ENCODE measurements at regions of chr7 and their contacts with region 1.

Region 1: DNA sequence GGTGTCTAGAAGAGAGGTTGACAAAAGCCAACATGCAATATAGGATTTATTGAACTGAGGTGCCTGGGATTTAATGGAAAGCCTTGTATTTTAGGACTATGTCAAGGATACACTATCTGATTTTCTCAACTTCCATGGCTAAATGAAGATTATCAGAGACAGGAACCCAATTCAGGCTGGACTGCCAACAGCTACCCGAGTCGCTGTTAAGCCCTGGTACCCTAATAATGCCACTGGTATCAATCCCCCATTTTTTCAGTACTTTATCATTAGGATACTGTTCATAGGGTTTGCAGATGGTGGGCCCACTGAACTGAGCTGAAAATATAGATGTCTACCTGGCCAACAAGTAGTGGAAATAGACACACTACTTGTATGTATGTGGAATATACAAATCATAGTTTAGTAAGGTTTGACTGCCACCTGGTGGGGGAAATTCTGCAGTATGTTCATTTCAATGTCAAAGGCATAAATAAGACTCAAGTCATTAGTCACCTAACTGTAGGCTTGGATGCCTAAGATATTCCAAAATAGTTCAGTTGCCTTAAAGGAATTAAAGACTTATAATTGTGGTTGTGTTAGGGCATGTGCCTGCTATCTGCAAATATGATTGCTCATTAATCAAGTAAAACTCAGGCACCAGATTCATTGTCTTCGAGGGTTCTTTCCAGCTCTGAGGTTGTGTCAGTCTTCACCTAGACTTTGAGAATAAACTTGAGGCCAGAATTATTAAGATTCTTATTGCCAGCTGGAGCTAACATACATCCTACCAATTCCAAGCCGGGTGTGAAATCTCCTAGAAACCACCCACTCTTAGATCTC is 34.1 kb upstream of the NOBOX start:
- DNase-seq: peak; percentile 54 to 75
- H3K4me3 ChIP-seq: no peak overlapping the region
- H3K27ac ChIP-seq: no peak overlapping the region
- H3K4me1 ChIP-seq: no peaks in the 10 kb centered on the region
- H3K27me3 ChIP-seq: no peaks in the 10 kb centered on the region
- CTCF ChIP-seq: peak in 2 of 3 experiments; percentile 48 to 77; a peak in 2 of 4 replicates
- EP300 ChIP-seq: no peak
- POLR2A ChIP-seq: no peak
- RAD21 ChIP-seq: peak; percentile 81 to 84

Region 2: GRCh38 chr7:144391823-144392255 is 45.7 kb before region 1 on chr7:
- CTCF ChIA-PET with region 1: interaction called, 28 read pairs
- POLR2A ChIA-PET with region 1: no interaction called
- DNase-seq: peak in 1 of 2 experiments; percentile 45
- H3K4me3 ChIP-seq: no peak overlapping the region
- H3K27ac ChIP-seq: no peak overlapping the region
- H3K4me1 ChIP-seq: peaks cover 0 to 2% (median 0%) of the 10 kb centered on the region in 4 experiments; a peak in 2 of 7 replicates
- H3K27me3 ChIP-seq: no peaks in the 10 kb centered on the region
- CTCF ChIP-seq: peak in 2 of 3 experiments; percentile 63 to 67; a peak in 3 of 4 replicates
- EP300 ChIP-seq: no peak
- POLR2A ChIP-seq: no peak
- RAD21 ChIP-seq: peak; percentile 86 to 90

Region 3: DNA sequence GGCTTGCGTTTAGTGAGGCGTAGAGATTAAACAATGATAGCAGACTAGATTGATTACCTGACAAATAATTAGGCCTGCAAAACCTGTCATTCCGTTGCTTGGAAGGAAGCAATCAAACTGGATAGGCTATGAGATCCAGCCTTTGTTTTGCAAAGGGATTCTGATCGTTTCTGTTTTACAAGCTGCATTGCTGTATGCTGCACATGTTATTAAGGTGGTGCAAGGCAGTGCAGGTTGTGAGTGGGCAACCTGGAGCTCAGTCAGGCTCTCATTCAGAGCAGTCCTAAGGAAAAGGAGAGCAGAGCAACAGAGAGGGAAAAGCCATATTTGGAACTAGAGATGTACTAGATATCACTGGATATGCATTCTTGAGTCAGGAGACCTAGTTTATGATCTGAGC is 27.1 kb before region 1 on chr7:
- CTCF ChIA-PET with region 1: interaction called, 12 read pairs
- POLR2A ChIA-PET with region 1: no interaction called
- DNase-seq: no peak
- H3K4me3 ChIP-seq: no peak overlapping the region
- H3K27ac ChIP-seq: no peak overlapping the region
- H3K4me1 ChIP-seq: peaks cover 0 to 6% (median 3%) of the 10 kb centered on the region in 4 experiments; a peak in 4 of 7 replicates
- H3K27me3 ChIP-seq: peaks cover 0 to 2% (median 0%) of the 10 kb centered on the region in 4 experiments; a peak in 1 of 7 replicates
- CTCF ChIP-seq: no peak
- EP300 ChIP-seq: no peak
- POLR2A ChIP-seq: no peak
- RAD21 ChIP-seq: no peak

Region 4: DNA sequence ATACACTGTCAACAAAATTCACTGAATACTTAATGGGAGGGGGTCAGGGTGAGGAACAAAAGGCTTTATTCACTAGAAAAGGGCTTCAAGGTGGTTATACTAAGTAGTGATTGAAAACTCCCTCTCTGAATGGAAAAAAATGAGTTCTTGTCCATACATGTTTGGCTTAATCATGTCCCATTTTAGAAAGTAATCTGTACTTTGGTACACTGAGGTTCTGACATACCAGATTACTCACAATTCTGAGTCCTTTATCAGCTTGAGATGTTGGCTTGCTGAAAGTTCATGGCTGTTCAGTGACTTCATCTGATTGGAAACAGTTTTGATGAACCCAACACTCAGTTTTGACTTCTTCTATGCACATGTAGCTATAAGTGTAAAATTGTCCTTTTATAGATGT is 21.2 kb before region 1 on chr7:
- CTCF ChIA-PET with region 1: interaction called, 12 read pairs
- POLR2A ChIA-PET with region 1: no interaction called
- DNase-seq: no peak
- H3K4me3 ChIP-seq: no peak overlapping the region
- H3K27ac ChIP-seq: no peak overlapping the region
- H3K4me1 ChIP-seq: no peaks in the 10 kb centered on the region
- H3K27me3 ChIP-seq: no peaks in the 10 kb centered on the region
- CTCF ChIP-seq: no peak
- EP300 ChIP-seq: no peak
- POLR2A ChIP-seq: no peak
- RAD21 ChIP-seq: no peak

Region 5: GRCh38 chr7:144454256-144455039 is 16.9 kb after region 1 on chr7:
- CTCF ChIA-PET with region 1: interaction called, 12 read pairs
- POLR2A ChIA-PET with region 1: no interaction called
- DNase-seq: no peak
- H3K4me3 ChIP-seq: no peak overlapping the region
- H3K27ac ChIP-seq: no peak overlapping the region
- H3K4me1 ChIP-seq: no peaks in the 10 kb centered on the region
- H3K27me3 ChIP-seq: no peaks in the 10 kb centered on the region
- CTCF ChIP-seq: peak in 1 of 3 experiments; percentile 37; a peak in 1 of 4 replicates
- EP300 ChIP-seq: no peak
- POLR2A ChIP-seq: no peak
- RAD21 ChIP-seq: peak; percentile 50 to 55; a peak in 3 of 4 replicates

Measured in H1 (cell line).